IMR-90 (cell line): ENCODE measurements at regions of chr12 and their contacts with region 1.

Region 1: DNA sequence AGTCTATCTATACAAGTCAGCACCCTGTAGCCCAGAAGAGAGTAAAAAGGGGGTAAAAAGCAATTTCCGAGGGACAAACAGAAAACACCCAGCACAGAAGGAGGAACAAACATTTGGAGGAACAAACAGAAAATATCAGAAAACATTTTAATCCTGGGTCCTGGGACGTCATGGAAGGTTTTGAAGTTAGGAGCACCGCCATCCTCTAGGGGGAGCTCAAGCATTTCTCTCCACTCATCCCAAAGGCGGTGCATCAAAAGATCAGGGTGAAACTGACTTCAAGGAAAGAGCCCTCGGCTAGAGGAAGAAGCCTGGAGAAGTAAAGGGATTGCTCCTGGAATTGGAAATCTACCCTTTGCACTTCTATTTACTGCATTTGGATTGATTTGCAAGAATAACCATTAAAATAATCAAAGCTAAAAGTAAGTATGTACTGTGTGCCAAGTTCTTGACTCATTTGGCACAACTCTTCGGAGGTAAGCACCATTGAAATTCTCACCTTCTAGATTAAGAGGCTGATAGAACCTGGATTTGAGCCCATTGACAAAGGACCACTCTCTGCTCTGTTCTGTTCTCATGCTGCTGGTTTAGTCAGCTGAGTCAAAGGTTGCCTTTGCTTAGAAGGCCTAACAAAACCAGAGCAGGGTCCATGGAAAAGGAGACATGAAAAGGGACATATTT is 17.2 kb upstream of the POC1B start:
- DNase-seq: peak; percentile 83
- ATAC-seq: peak; percentile 94
- H3K4me3 ChIP-seq: no peak overlapping the region
- H3K27ac ChIP-seq: no peak overlapping the region
- H3K4me1 ChIP-seq: no peaks in the 10 kb centered on the region
- H3K27me3 ChIP-seq: no peaks in the 10 kb centered on the region
- CTCF ChIP-seq: peak; percentile 96
- POLR2A ChIP-seq: no peak
- RAD21 ChIP-seq: peak; percentile 97

Region 2: GRCh38 chr12:89514751-89515150 is 28.3 kb before region 1 on chr12:
- CTCF ChIA-PET with region 1: no interaction called
- POLR2A ChIA-PET with region 1: no interaction called
- dilution Hi-C with region 1: no loop called
- in situ Hi-C with region 1: no loop called
- intact Hi-C with region 1: no loop called
- DNase-seq: no peak
- ATAC-seq: no peak
- H3K4me3 ChIP-seq: no peak overlapping the region
- H3K27ac ChIP-seq: no peak overlapping the region
- H3K4me1 ChIP-seq: no peaks in the 10 kb centered on the region
- H3K27me3 ChIP-seq: no peaks in the 10 kb centered on the region
- CTCF ChIP-seq: no peak
- POLR2A ChIP-seq: no peak
- RAD21 ChIP-seq: no peak

Region 3: DNA sequence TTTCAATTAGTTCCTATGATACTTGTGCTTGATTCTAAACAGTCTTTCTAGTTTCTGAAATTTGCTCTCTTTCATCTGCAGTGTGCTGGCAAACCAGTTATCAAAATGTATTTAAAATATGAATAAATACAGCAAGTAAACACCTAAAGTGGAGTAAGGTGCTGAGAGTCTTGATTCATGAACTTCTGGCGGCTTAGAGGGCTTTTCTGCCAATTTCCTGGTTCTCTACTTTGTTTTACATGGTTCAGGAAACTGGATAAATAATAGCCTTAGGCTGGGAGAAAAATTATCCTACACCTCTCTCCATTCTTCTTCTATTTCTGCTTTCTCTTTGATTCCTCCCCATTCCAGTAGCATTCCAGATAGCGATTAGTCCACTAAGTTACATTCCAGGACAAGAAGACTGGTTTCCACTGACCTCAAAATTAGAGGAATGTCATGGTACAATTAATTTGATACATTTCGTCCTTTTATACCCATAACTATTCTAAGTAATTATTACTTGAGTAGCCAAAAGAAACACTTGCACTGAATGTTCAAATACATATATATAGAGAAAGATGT is 150.7 kb after region 1 on chr12:
- CTCF ChIA-PET with region 1: interaction called, 3 read pairs
- POLR2A ChIA-PET with region 1: no interaction called
- dilution Hi-C with region 1: no loop called
- in situ Hi-C with region 1: no loop called
- intact Hi-C with region 1: loop called (anchors 5 kb)
- DNase-seq: no peak
- ATAC-seq: no peak
- H3K4me3 ChIP-seq: no peak overlapping the region
- H3K27ac ChIP-seq: no peak overlapping the region
- H3K4me1 ChIP-seq: peaks cover 3% of the 10 kb centered on the region; the same call in 1 of the 2 replicates
- H3K27me3 ChIP-seq: no peaks in the 10 kb centered on the region
- CTCF ChIP-seq: no peak
- POLR2A ChIP-seq: no peak
- RAD21 ChIP-seq: no peak

Region 4: GRCh38 chr12:90102957-90103652 is 560.1 kb after region 1 on chr12:
- CTCF ChIA-PET with region 1: interaction called, 7 read pairs
- POLR2A ChIA-PET with region 1: no interaction called
- dilution Hi-C with region 1: no loop called
- in situ Hi-C with region 1: loop called (anchors 5 kb)
- intact Hi-C with region 1: loop called (anchors 1 kb)
- DNase-seq: peak; percentile 53
- ATAC-seq: peak; percentile 79
- H3K4me3 ChIP-seq: no peak overlapping the region
- H3K27ac ChIP-seq: no peak overlapping the region
- H3K4me1 ChIP-seq: peaks cover 3% of the 10 kb centered on the region
- H3K27me3 ChIP-seq: no peaks in the 10 kb centered on the region
- CTCF ChIP-seq: peak; percentile 64
- POLR2A ChIP-seq: no peak
- RAD21 ChIP-seq: peak; percentile 69

Region 5: GRCh38 chr12:90335566-90335965 is 792.5 kb after region 1 on chr12:
- CTCF ChIA-PET with region 1: no interaction called
- POLR2A ChIA-PET with region 1: no interaction called
- dilution Hi-C with region 1: no loop called
- in situ Hi-C with region 1: no loop called
- intact Hi-C with region 1: loop called (anchors 5 kb)
- DNase-seq: no peak
- ATAC-seq: no peak
- H3K4me3 ChIP-seq: no peak overlapping the region
- H3K27ac ChIP-seq: no peak overlapping the region
- H3K4me1 ChIP-seq: no peaks in the 10 kb centered on the region
- H3K27me3 ChIP-seq: no peaks in the 10 kb centered on the region
- CTCF ChIP-seq: no peak
- POLR2A ChIP-seq: no peak
- RAD21 ChIP-seq: no peak

Region 6: DNA sequence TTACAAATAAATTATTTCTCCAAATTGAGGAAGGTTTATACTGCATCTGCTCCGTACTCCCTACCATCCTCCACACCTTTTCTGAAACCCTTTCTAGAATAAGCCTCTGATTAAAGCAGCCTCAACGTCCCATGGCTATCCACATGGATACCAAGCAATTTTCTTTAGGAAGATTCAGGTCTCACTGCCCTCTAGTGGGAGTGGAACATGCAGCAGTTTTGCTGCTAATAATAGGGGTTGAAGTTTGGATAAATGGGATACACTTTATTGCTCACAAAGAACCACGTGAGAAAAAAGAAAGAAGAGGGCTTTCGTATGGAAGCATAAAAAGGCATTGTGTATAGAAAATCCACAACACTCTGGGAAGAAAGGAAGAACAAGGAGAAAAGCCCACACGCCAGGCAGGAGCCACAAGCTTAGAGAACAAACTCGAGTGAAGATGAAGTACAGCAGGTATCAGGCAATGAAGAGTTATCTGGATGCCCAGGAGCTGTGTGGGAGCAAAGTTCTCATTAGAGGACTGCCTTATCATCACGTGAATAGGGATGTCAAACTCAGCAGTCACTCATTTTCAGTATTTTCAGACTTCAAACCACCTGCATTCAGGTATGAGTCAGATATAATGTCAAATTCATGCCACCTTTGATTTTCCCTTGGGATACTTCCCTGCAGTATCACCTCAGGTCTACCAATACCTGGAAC is 1366.2 kb after region 1 on chr12:
- CTCF ChIA-PET with region 1: no interaction called
- POLR2A ChIA-PET with region 1: no interaction called
- dilution Hi-C with region 1: no loop called
- in situ Hi-C with region 1: no loop called
- intact Hi-C with region 1: loop called (anchors 10 kb)
- DNase-seq: peak; percentile 67
- ATAC-seq: peak; percentile 79
- H3K4me3 ChIP-seq: no peak overlapping the region
- H3K27ac ChIP-seq: no peak overlapping the region
- H3K4me1 ChIP-seq: peaks cover 2% of the 10 kb centered on the region; the same call in 1 of the 2 replicates
- H3K27me3 ChIP-seq: no peaks in the 10 kb centered on the region
- CTCF ChIP-seq: peak; percentile 67
- POLR2A ChIP-seq: no peak
- RAD21 ChIP-seq: peak; percentile 65